ENCODE measurements at regions of chr1 and their contacts with region 1.

Region 1: DNA sequence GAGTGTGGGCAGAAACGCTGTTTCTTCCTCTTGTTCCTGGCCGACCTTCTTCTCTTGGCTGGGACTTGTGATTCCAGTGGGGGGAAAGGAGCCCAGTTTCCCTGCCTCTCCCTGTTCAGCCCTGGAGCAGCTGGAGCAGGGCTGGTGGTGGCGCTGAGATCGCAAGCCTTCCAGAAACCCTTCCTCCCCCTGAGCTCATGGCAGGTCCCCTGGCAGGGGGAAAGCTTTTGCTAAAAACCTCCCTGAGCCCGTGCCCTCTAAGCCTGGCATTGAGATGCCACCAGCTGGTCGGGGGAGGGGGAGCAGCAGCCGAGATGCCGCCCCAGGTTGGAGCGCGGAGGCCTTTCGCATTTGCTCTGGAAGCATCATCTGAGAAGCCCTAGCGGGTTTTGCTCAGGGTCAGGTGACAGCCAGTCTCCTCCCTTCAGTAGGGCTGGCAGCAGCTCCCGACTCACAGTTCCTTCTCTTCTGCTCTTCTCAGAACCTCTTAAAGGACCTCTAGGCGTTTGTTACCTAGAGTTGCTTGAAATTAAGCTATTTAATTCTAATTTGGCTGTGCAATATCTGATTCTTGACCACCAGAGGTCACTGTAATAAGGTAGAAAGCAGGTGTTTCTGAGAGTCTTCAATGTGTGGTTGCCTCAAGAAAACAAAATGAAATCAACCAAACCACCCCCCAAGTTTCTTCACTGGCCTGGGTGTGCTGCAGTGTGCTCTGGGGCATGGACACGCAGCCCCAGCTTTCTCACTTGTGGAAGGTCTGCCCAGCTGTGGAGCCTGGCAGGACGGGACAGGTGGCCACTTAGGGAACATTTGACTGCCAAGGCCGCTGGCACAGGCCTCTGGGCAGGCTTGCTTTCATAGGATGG is 257.3 kb downstream of the CAMTA1 start:
- DNase-seq: peak in 4 of 10 donors; percentile 31 to 74 (median 38)
- H3K4me3 ChIP-seq: peak overlapping the region in 10 of 59 donors; percentile 4 to 16 (median 9)
- H3K27ac ChIP-seq: peak overlapping the region in 34 of 59 donors; percentile 0 to 74 (median 42)
- H3K27me3 ChIP-seq: peaks cover 0 to 7% (median 0%) of the 10 kb centered on the region in 45 donors
- CTCF ChIP-seq: peak; percentile 21 to 63 (median 45)

Region 2: DNA sequence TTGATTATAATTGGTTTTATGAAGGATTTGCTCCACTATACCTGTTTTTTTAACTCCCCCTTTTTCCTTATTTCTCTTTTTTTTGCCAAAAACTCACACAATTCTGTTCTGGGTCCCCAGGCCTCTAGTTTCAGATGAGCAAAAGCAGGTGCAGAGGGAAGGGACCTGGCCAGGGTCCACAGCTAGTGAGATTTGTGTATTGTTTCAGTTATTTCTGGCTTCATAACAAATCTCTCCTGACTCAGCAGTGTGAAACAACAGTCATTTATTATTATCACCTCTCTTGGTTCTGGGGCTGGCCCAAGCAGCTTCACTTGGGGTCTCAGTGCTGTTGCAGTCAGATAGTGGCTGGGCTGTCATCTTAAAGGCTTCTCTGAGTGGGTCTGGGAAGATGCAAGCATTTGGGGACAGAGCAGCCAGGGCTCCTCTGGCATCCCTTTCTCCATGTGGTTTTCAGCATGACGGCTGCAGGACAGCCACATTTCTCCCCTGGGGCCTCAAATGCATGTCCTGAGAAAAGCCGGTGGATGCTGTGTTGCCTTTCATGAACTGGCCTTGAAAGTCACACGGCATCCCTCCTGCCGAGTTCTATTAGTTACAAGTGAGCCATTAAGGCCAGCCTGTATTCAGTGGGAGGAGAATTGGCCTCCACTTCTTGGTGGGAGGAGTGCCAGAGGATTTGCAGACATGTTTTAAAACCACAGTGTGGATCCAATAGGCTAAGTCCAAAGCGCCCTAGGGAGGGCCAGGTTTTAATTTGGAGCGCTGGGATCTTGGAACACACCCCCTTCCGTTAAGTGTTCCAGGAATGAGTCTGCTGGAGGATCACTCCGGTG is 120.2 kb before region 1 on chr1:
- intact Hi-C with region 1: loop called in 1 of 2 experiments (anchors 10 kb)
- DNase-seq: peak in 5 of 10 donors; percentile 21 to 62 (median 49)
- H3K4me3 ChIP-seq: no peak overlapping the region
- H3K27ac ChIP-seq: peak overlapping the region in 22 of 59 donors; percentile 1 to 73 (median 40)
- H3K27me3 ChIP-seq: no peaks in the 10 kb centered on the region
- CTCF ChIP-seq: no peak

Region 3: GRCh38 chr1:6948861-6949260 is 93.7 kb before region 1 on chr1:
- intact Hi-C with region 1: no loop called
- DNase-seq: no peak
- H3K4me3 ChIP-seq: no peak overlapping the region
- H3K27ac ChIP-seq: no peak overlapping the region
- H3K27me3 ChIP-seq: no peaks in the 10 kb centered on the region
- CTCF ChIP-seq: no peak

Region 4: GRCh38 chr1:7002728-7003127 is 39.8 kb before region 1 on chr1:
- intact Hi-C with region 1: no loop called
- DNase-seq: no peak
- H3K4me3 ChIP-seq: no peak overlapping the region
- H3K27ac ChIP-seq: no peak overlapping the region
- H3K27me3 ChIP-seq: no peaks in the 10 kb centered on the region
- CTCF ChIP-seq: no peak

Region 5: GRCh38 chr1:7290971-7291970 is 248.7 kb after region 1 on chr1:
- intact Hi-C with region 1: no loop called
- DNase-seq: peak in 5 of 10 donors; percentile 38 to 58 (median 55)
- H3K4me3 ChIP-seq: no peak overlapping the region
- H3K27ac ChIP-seq: peak overlapping the region in 1 of 59 donors; percentile 3
- H3K27me3 ChIP-seq: no peaks in the 10 kb centered on the region
- CTCF ChIP-seq: no peak

Measured in dorsolateral prefrontal cortex (tissue), 120 donors.